Panc1 (cell line): ENCODE measurements at regions of chr9 and their contacts with region 1.

Region 1: DNA sequence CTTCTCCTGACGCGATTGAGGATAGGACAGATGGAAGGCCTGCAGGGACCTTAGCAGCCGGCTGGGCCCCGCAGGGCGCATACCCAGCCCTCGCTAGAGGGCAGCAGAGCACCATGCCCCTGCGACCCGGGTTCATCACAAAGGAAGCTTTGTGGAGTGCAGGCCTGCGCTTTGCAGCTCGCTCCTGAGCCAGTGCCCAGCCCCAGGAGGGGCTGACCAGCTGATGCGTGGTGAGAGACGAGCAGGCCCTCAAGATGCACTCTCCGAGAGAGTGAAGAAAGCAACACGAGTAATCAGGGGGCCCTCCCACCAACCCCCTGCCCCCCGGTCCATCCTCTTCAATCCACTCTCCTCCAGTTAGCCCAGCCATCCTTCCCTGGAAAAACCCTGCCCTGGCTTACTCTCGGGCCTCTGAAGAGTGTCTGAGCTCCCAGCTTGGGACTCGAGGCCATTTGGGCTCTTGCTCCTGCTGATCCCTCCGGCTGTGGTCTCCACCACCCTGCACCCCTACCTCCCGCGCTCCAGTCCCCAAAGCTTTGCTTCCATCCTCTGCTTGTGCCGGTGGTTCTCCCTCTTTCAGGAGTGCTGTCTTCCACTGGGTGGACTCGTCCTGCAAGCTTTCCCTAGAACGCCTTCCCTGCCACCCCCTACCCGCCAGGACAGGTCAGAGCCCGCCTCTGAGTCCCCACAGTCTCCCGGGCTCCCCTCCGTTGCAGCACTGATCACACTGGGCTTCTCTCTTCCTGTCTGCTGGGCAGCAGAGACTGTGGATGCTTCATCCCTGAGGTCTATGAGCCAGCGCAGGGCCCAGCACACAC is 9.1 kb upstream of the KIF12 start:
- DNase-seq: peak; percentile 47
- ATAC-seq: peak; percentile 100
- H3K4me3 ChIP-seq: no peak overlapping the region
- H3K27ac ChIP-seq: no peak overlapping the region
- H3K4me1 ChIP-seq: no peaks in the 10 kb centered on the region
- H3K27me3 ChIP-seq: peaks cover 5% of the 10 kb centered on the region
- CTCF ChIP-seq: peak; percentile 93

Region 2: GRCh38 chr9:113844466-113844865 is 263.8 kb before region 1 on chr9:
- CTCF ChIA-PET with region 1: no interaction called
- POLR2A ChIA-PET with region 1: no interaction called
- in situ Hi-C with region 1: no loop called
- intact Hi-C with region 1: no loop called
- DNase-seq: no peak
- ATAC-seq: no peak
- H3K4me3 ChIP-seq: no peak overlapping the region
- H3K27ac ChIP-seq: no peak overlapping the region
- H3K4me1 ChIP-seq: no peaks in the 10 kb centered on the region
- H3K27me3 ChIP-seq: no peaks in the 10 kb centered on the region
- CTCF ChIP-seq: no peak

Region 3: DNA sequence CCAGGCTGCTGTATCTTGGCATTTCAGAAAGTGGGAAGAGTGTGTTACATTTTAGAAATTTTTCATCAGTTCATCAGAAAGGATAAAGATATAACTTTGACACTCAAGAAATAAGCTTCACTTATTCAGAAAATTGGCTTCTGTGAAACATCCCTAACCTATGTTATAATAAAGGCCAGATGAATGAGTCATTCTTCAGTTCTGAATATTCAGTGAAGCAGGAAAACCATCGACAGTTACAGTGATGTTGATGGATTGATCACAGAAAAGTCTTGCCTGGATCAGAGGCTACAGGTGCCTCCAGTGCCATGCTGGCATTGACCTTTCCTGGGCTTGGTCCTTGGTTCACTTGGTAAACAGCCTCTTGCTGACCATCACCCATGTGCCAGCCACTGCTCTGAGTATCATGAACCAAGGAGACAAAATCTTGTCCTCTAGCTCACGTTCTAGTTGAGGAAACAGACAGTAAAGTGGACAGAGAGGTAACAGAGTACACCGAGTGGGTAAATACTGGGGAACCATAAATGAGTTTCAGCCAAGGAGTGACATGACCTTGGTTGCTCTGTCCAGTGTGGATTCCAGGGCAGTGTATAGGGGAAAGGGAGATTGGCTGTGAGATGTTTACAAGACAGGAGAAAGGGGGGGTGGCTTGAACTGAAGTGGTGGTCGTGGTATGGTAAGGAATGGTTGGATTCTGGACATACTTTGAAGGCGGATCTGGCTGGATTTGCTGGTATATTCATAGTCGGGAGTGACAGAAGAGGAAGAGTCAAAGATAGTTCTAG is 128.7 kb before region 1 on chr9:
- CTCF ChIA-PET with region 1: no interaction called
- POLR2A ChIA-PET with region 1: no interaction called
- in situ Hi-C with region 1: no loop called
- intact Hi-C with region 1: no loop called
- DNase-seq: no peak
- ATAC-seq: no peak
- H3K4me3 ChIP-seq: no peak overlapping the region
- H3K27ac ChIP-seq: no peak overlapping the region
- H3K4me1 ChIP-seq: no peaks in the 10 kb centered on the region
- H3K27me3 ChIP-seq: no peaks in the 10 kb centered on the region
- CTCF ChIP-seq: no peak

Region 4: DNA sequence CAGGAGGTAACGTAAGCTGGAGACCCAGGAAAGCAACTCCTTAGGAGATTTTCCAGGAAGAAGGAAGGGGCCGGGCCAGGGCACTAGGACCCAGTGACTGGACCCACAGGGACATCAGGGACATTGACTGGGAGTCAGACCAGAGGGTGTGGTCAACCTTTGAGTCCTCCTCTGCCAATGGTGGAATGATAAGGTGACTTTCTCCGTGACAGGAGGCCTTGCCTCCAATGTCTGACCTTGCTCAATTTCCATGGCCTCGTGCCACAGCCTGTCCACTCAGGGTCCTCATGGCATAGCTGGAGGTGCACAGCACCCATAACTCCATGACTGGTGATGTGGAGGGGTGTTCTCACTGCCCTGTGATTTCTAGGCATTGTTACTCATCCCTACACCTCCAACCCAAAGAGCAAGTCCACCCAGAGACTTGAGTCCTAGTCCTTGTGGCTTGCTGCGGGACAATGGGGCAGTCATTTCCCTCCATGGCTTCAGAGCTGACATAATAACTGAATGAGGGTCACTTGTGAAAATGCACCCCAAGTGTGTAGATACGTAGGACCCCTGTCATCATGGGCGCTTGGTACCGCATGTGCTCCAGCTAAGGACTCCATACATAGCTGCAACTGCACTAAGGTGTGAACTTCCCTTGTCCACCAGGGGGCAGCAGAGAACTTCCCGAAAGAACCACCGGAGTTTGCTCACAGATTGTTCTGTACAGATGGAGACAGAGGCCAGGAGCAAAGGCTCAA is 26.0 kb before region 1 on chr9:
- CTCF ChIA-PET with region 1: interaction called, 17 read pairs
- POLR2A ChIA-PET with region 1: no interaction called
- in situ Hi-C with region 1: no loop called
- intact Hi-C with region 1: no loop called
- DNase-seq: peak; percentile 50
- ATAC-seq: peak; percentile 98
- H3K4me3 ChIP-seq: no peak overlapping the region
- H3K27ac ChIP-seq: no peak overlapping the region
- H3K4me1 ChIP-seq: no peaks in the 10 kb centered on the region
- H3K27me3 ChIP-seq: no peaks in the 10 kb centered on the region
- CTCF ChIP-seq: peak; percentile 84

Region 5: GRCh38 chr9:114155263-114155972 is 47.2 kb after region 1 on chr9 and contains the start of gene COL27A1:
- CTCF ChIA-PET with region 1: interaction called, 17 read pairs
- POLR2A ChIA-PET with region 1: no interaction called
- in situ Hi-C with region 1: no loop called
- intact Hi-C with region 1: loop called (anchors 5 kb)
- DNase-seq: no peak
- ATAC-seq: peak; percentile 90
- H3K4me3 ChIP-seq: peak within 1 kb of the TSS; percentile 52 to 56
- H3K27ac ChIP-seq: peak within 1 kb of the TSS; percentile 58
- H3K4me1 ChIP-seq: peaks cover 4% of the 10 kb centered on the region
- H3K27me3 ChIP-seq: peaks cover 2% of the 10 kb centered on the region; the same call in 1 of the 2 replicates
- CTCF ChIP-seq: peak; percentile 91
- total RNA-seq, gene COL27A1: 5.1 TPM

Region 6: DNA sequence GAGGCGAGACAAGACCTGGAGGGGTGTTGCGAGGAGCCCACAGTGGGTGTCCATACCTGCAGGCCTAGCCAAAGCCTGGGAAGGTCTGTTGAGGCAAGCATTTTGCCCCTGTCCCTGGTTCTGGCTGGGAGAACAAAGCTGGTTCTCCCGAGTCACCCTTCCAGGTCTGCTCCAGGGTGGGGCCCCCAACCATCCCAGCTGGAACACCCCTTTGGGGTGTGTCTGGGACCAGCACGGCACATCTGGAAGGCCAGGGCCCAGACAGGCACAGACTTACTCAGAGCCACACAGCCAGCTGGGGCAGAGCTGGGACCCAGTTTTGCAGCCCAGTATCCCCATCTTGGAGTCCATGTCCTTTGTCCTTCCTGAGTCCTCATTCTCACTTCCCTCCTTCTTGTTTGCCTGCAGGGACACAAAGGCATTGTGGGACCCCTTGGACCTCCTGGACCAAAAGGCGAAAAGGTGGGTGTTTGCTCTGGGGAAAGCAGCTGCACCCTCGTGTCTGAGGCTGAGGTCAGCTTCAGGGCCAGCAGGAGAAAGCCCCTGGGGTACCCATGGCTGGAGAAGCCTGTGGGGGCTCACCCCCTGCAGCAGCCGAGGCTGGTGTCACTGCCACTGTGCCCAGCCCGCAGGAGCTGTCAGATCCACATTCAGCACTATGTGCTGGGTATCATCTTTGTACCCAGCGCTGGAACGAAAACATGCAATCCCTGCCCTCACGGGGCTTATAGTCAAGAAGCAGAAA is 176.3 kb after region 1 on chr9:
- CTCF ChIA-PET with region 1: interaction called, 10 read pairs
- POLR2A ChIA-PET with region 1: no interaction called
- in situ Hi-C with region 1: no loop called
- intact Hi-C with region 1: loop called (anchors 1 kb)
- DNase-seq: no peak
- ATAC-seq: no peak
- H3K4me3 ChIP-seq: no peak overlapping the region
- H3K27ac ChIP-seq: no peak overlapping the region
- H3K4me1 ChIP-seq: peaks cover 15% of the 10 kb centered on the region
- H3K27me3 ChIP-seq: no peaks in the 10 kb centered on the region
- CTCF ChIP-seq: no peak

Region 7: DNA sequence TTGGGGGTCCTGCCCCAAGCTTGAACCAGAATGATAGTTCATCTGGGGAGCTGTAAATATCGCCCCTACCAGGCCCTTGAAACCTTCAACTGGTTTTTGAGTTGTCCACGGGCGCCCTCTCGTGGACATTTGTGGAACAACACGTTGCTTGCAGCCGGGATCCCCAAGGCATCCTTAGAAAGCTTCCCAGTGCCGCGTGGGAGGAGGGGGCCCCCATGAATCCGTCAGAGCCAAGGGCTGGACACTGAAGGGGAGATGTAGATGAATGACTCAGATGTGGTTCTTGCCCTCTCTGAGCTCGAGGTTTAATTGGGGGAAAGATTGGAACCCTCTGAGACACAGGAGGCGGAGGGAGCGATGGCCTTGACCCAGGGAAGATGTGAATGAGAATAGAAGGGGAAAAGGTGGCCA is 182.8 kb after region 1 on chr9:
- CTCF ChIA-PET with region 1: interaction called, 15 read pairs
- POLR2A ChIA-PET with region 1: no interaction called
- in situ Hi-C with region 1: no loop called
- intact Hi-C with region 1: loop called (anchors 1 kb)
- DNase-seq: no peak
- ATAC-seq: peak; percentile 62
- H3K4me3 ChIP-seq: no peak overlapping the region
- H3K27ac ChIP-seq: no peak overlapping the region
- H3K4me1 ChIP-seq: peaks cover 15% of the 10 kb centered on the region
- H3K27me3 ChIP-seq: no peaks in the 10 kb centered on the region
- CTCF ChIP-seq: peak; percentile 85